CD4-positive, alpha-beta memory T cell (primary cell): ENCODE measurements at regions of chr18 and their contacts with region 1.

Region 1: GRCh38 chr18:13726232-13726971 is at the starts of genes FAM210A and RNMT:
- DNase-seq: peak; percentile 90 to 95 (median 92)
- H3K4me3 ChIP-seq: peak within 1 kb of the TSS; percentile 76 to 78
- H3K4me3 Mint-ChIP-seq: peak within 1 kb of the TSS; percentile 87 to 97 (median 92)
- H3K27ac ChIP-seq: peak within 1 kb of the TSS; percentile 96
- H3K27ac Mint-ChIP-seq: peak within 1 kb of the TSS; percentile 85 to 98 (median 97)
- H3K4me1 ChIP-seq: peaks cover 49% of the 10 kb centered on the region
- H3K4me1 Mint-ChIP-seq: peaks cover 41 to 67% (median 51%) of the 10 kb centered on the region in 4 donors
- H3K27me3 ChIP-seq: no peaks in the 10 kb centered on the region
- H3K27me3 Mint-ChIP-seq: no peaks in the 10 kb centered on the region
- total RNA-seq, gene FAM210A: 9.4 to 10.2 TPM
- total RNA-seq, gene RNMT: 53.7 to 55.0 TPM

Region 2: DNA sequence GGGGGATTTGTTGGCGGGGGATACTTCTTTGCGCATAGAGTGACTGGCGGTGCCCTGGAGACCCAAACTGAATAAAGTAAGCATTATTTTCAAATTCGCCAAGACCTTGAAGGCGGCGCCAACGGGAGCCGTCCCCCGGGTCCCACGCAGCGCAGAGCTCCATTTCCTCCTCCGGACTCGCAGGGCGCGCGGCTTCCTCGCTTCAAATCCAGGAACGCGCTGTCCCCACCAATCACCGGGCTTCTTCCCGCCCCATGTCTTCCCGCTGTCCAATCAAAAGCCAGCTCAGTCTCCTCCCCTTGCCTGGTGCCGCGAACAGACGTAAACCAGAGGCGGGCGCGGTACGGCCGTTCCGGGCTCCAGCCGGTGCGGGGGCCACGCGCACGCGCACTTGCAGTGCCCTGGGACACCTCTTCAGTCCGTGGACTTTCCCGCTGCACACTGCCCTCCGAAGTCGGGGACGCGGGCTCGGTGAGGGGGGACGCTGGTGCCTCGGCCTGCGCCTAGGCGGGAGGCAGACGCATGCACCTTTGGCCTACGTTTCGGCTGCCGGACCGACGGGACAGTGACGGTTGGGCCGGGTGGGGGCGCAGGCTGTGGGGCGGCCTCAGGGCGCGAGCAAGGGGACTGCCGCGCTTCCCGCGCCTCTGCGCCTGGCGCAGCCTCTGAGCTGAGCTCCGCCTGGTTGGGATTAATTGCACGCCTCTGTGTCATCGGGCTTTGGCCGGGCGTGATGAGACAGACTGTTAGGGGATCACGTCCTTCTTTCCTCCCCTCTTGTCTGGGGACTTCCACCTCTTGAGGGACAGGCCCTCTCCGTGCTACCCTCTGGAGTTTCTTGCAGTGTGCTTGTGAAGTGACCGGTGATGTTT is 735.2 kb before region 1 on chr18 and contains the start of gene CEP192:
- CTCF ChIA-PET with region 1: no interaction called
- POLR2A ChIA-PET with region 1: interaction called, 4 read pairs
- intact Hi-C with region 1: loop called (anchors 2 kb)
- DNase-seq: peak; percentile 97 to 98 (median 98)
- H3K4me3 ChIP-seq: peak within 1 kb of the TSS; percentile 70 to 86
- H3K4me3 Mint-ChIP-seq: peak within 1 kb of the TSS; percentile 93 to 99 (median 98)
- H3K27ac ChIP-seq: peak within 1 kb of the TSS; percentile 93
- H3K27ac Mint-ChIP-seq: peak within 1 kb of the TSS; percentile 88 to 99 (median 97)
- H3K4me1 ChIP-seq: peaks cover 42% of the 10 kb centered on the region
- H3K4me1 Mint-ChIP-seq: peaks cover 0 to 29% (median 23%) of the 10 kb centered on the region in 4 donors
- H3K27me3 ChIP-seq: no peaks in the 10 kb centered on the region
- H3K27me3 Mint-ChIP-seq: no peaks in the 10 kb centered on the region
- total RNA-seq, gene CEP192: 42.5 to 45.5 TPM

Region 3: DNA sequence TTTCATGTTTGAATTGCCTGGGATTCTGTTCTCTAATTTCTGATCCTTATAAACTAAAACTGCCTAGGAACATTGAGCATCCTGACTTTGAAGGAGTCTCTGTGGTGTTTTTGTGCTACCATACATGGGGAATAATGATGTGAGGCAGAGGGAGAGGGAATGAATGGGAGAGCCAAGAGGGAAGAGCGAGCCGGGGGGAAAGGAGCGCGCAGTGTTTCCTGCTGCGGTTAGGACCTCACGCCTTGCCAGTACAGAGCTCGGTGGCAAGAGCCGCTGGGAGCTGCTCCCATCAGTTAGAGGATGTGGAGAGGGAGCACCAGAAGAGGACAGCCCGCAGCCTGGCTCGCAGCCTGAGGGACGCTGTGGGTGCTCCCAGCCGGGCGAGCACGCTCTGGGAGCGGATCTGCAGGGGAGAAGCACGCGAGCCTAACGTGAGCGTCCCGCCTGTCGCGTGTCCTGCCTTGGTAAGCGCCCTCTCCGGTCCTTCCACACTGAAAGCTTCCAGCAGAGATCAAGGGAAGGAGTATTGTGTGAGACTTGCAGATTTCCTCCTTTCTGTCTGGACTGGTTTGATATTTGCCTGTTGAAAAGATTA is 114.7 kb before region 1 on chr18:
- CTCF ChIA-PET with region 1: no interaction called
- POLR2A ChIA-PET with region 1: interaction called, 13 read pairs
- intact Hi-C with region 1: loop called (anchors 2 kb)
- DNase-seq: no peak
- H3K4me3 ChIP-seq: peak overlapping the region; percentile 34 to 51
- H3K4me3 Mint-ChIP-seq: peak overlapping the region; percentile 78 to 96 (median 88)
- H3K27ac ChIP-seq: peak overlapping the region; percentile 11
- H3K27ac Mint-ChIP-seq: peak overlapping the region; percentile 83 to 96 (median 91)
- H3K4me1 ChIP-seq: peaks cover 81% of the 10 kb centered on the region
- H3K4me1 Mint-ChIP-seq: peaks cover 68 to 85% (median 76%) of the 10 kb centered on the region in 4 donors
- H3K27me3 ChIP-seq: no peaks in the 10 kb centered on the region
- H3K27me3 Mint-ChIP-seq: no peaks in the 10 kb centered on the region

Region 4: DNA sequence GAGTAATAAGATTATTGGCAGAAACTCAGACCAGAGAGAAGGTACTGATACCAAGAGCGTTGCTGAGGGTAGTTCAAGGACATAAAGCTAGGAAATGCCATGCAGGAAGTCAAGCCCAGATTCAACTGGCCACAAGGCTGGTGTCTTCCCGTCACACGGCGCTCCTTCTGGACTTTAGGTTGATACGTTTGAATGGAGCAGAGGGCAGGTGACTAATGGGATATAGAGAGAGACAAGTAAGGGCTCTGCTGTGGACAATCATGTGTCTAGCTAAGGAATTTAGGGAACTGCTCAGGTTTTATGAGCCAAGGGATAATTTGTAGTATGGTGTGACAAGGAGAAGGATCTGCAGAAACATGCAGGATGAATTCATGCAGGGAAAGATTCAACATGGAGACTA is 272.8 kb after region 1 on chr18:
- CTCF ChIA-PET with region 1: no interaction called
- POLR2A ChIA-PET with region 1: no interaction called
- intact Hi-C with region 1: no loop called
- DNase-seq: no peak
- H3K4me3 ChIP-seq: no peak overlapping the region
- H3K4me3 Mint-ChIP-seq: no peak overlapping the region
- H3K27ac ChIP-seq: no peak overlapping the region
- H3K27ac Mint-ChIP-seq: peak overlapping the region in 1 of 7 donors; percentile 8
- H3K4me1 ChIP-seq: no peaks in the 10 kb centered on the region
- H3K4me1 Mint-ChIP-seq: no peaks in the 10 kb centered on the region
- H3K27me3 ChIP-seq: no peaks in the 10 kb centered on the region
- H3K27me3 Mint-ChIP-seq: no peaks in the 10 kb centered on the region